Activated CD4-positive, alpha-beta memory T cell treated with anti-CD3 and anti-CD28 coated beads, Interleukin-2, amount 10 ng/mL, durations not matched to agents 7 days and 5 days (primary cell): ENCODE measurements at regions of chr15 and their contacts with region 1.

Region 1: DNA sequence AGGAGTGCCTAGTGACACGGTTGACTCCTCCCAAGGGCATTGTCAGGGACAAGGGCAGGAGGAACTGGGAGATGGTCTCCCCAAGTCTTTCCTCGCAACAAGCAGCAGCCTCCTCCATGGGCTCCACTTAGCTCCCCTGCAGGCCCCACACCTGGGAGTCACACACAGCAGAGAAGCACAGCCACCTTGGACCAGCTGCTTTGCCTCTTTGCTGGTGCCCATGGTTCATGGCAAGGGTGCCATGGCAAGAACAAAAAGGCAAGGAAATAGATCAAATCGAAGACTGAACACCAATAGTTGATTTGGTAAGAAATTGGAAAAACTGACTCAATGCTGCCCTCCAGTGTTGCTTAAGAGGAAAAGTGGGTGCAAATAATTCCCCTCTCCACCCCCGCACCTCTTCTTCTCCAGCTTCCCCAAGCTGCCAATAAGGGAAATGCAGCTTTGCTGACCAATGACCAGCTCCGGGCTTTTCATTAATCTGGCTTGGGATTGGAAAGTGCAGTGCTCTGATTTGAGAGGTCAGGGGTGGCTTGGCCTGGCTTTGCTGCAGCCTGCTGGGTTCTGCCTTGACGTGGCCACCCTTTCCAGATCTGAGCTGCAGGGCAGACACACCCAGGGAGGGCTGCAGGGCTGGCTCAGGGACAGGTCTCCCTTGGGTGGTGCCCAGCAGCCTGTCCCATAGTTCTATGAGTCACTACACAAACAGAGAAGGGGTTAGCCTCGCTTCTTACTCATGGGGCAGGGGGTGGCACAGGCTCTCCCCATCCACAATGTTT is 162.0 kb downstream of the KLF13 start:
- DNase-seq: peak; percentile 49
- H3K4me3 Mint-ChIP-seq: no peak overlapping the region
- H3K27ac Mint-ChIP-seq: peak overlapping the region; percentile 21
- H3K4me1 Mint-ChIP-seq: peaks cover 63% of the 10 kb centered on the region
- H3K27me3 Mint-ChIP-seq: peaks cover 7% of the 10 kb centered on the region

Region 2: DNA sequence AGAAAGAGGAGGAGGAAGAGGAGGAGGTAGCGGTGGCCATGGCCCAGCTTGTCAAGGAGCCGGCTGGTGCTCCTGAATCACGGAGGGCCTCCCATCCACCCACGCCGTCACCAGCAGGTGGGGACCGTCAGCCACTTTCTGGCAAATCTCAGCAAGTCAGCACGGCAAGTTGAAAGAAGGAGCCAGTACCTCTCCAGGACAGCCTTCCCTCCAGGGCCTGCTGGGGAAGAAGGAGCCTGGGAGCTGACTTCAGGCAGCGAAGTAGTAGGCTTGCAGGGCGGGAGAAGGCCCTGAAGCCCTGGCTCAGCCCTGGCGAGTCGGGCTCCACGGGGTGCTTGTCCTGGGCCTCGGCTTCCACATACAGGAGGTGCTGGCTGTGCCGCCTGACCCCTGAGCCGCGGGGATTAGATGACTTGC is 287.9 kb before region 1 on chr15:
- CTCF ChIA-PET with region 1: interaction called, 44 read pairs
- POLR2A ChIA-PET with region 1: interaction called, 4 read pairs
- DNase-seq: peak; percentile 79
- H3K4me3 Mint-ChIP-seq: no peak overlapping the region
- H3K27ac Mint-ChIP-seq: no peak overlapping the region
- H3K4me1 Mint-ChIP-seq: peaks cover 21% of the 10 kb centered on the region
- H3K27me3 Mint-ChIP-seq: peaks cover 21% of the 10 kb centered on the region

Region 3: DNA sequence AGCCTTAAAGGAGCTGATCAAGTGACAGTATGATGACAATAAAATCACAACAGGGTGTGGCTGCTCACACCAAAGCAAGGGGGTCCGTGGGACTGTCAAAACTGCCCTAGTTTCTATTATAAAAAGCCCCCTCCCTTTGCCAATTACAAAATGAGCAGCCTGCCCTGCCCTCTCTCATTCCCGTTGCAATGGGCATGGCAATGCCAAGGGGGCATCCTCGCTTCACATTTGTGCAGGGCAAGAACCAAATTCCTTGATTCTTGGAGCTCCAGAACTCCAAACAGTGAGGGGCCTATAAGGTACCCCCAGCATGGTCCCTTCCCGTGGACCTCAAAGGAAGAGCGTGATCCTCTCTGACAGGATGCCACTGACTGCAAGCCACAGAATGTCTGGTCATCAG is 282.2 kb before region 1 on chr15:
- CTCF ChIA-PET with region 1: interaction called, 44 read pairs
- POLR2A ChIA-PET with region 1: interaction called, 4 read pairs
- DNase-seq: no peak
- H3K4me3 Mint-ChIP-seq: no peak overlapping the region
- H3K27ac Mint-ChIP-seq: no peak overlapping the region
- H3K4me1 Mint-ChIP-seq: peaks cover 39% of the 10 kb centered on the region
- H3K27me3 Mint-ChIP-seq: peaks cover 3% of the 10 kb centered on the region

Region 4: GRCh38 chr15:31215490-31216214 is 273.0 kb before region 1 on chr15:
- CTCF ChIA-PET with region 1: interaction called, 24 read pairs
- POLR2A ChIA-PET with region 1: interaction called, 11 read pairs
- DNase-seq: peak; percentile 85
- H3K4me3 Mint-ChIP-seq: peak overlapping the region; percentile 78
- H3K27ac Mint-ChIP-seq: peak overlapping the region; percentile 78
- H3K4me1 Mint-ChIP-seq: peaks cover 47% of the 10 kb centered on the region
- H3K27me3 Mint-ChIP-seq: no peaks in the 10 kb centered on the region

Region 5: GRCh38 chr15:31391687-31392671 is 96.6 kb before region 1 on chr15:
- CTCF ChIA-PET with region 1: interaction called, 6 read pairs
- POLR2A ChIA-PET with region 1: interaction called, 13 read pairs
- DNase-seq: peak; percentile 87
- H3K4me3 Mint-ChIP-seq: peak overlapping the region; percentile 88
- H3K27ac Mint-ChIP-seq: peak overlapping the region; percentile 80
- H3K4me1 Mint-ChIP-seq: peaks cover 49% of the 10 kb centered on the region
- H3K27me3 Mint-ChIP-seq: no peaks in the 10 kb centered on the region

Region 6: DNA sequence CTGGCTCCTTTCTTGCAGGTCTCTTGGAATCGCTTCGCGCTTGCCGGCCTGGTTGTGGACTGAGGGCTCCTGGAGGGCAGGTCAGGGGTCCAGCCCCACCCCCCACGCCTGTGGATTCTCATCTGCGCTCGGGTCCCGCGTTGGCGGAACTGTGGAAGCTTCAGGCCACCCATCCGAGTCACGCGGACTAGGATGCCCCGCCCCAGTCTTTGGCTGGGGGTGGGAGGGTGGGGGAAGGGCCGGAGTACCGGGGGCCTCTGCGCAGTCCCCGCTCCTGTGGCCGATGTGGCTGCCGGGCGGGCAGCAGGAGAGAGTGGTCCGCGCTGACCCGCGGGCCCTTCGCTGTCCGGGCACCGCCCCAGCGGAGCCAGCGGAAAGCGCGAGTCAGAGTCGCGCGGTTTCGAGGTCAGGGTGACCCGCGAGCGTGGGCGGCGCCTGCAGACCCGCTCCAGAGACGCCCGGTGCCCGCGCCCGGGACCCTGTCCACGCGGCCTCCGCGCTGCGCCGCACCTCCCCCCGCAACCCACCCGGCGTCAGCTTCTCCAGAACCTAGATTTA is 47.8 kb before region 1 on chr15:
- CTCF ChIA-PET with region 1: interaction called, 117 read pairs
- POLR2A ChIA-PET with region 1: interaction called, 48 read pairs
- DNase-seq: peak; percentile 60
- H3K4me3 Mint-ChIP-seq: peak overlapping the region; percentile 77
- H3K27ac Mint-ChIP-seq: peak overlapping the region; percentile 81
- H3K4me1 Mint-ChIP-seq: peaks cover 69% of the 10 kb centered on the region
- H3K27me3 Mint-ChIP-seq: no peaks in the 10 kb centered on the region

Region 7: DNA sequence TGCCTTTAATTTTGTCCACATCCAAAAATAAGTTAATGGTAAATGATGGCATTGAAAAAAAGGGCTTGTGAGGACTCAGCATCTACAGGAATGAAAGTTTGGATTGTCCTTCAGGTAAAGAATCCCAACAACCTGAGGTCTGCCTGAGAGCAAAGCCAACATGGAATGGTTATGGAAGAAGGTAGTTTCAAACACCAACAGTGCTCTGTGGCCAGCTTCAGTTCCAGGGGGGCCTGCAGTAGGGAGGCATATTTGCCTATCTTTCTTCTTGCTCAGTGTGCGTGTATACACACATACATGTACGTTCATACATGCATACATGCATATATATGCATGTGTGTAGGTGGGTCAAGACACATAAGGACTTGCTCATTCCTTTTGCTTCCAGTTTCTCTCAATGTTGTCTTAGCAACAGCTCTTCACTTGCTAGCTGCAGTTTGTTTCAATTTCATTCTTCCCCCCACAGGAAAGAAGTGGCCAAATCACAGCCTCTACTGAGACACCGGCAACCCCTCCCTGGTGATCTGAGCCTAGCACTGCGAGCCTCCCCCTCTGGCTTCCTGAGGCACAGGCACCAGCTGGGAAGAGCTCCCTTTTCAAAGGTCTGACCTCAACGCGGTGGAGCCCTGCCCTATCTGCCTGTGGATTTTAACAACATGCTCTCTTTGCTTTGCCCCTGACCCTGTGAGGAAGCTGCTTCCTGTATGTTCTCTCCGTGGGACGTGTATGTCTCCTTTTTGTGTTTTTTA is 15.8 kb before region 1 on chr15:
- CTCF ChIA-PET with region 1: interaction called, 37 read pairs
- POLR2A ChIA-PET with region 1: interaction called, 43 read pairs
- DNase-seq: peak; percentile 69
- H3K4me3 Mint-ChIP-seq: peak overlapping the region; percentile 65
- H3K27ac Mint-ChIP-seq: peak overlapping the region; percentile 80
- H3K4me1 Mint-ChIP-seq: peaks cover 35% of the 10 kb centered on the region
- H3K27me3 Mint-ChIP-seq: no peaks in the 10 kb centered on the region

Region 8: DNA sequence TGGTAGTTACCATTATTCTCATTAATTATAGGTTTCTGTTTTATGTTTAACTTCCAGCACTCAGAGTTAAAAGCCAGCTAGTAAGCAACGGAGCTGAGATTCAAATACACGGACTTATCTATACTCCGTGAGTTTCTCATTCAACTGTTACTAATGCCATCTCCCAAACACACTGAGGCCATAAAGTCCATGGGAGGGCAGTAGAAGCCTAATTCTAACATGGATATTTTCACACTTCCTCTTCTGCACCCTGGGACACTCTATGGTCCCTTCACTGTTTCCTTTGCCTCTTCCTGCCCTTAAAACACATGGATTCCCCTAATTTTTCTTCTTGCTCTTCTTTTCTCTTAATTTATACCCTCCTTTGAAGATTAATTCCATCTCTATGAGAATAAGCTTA is 83.1 kb after region 1 on chr15:
- CTCF ChIA-PET with region 1: no interaction called
- POLR2A ChIA-PET with region 1: no interaction called
- DNase-seq: no peak
- H3K4me3 Mint-ChIP-seq: no peak overlapping the region
- H3K27ac Mint-ChIP-seq: no peak overlapping the region
- H3K4me1 Mint-ChIP-seq: no peaks in the 10 kb centered on the region
- H3K27me3 Mint-ChIP-seq: peaks cover 3% of the 10 kb centered on the region